HCT116 (cell line): ENCODE measurements at regions of chr7 and their contacts with region 1.

Region 1: DNA sequence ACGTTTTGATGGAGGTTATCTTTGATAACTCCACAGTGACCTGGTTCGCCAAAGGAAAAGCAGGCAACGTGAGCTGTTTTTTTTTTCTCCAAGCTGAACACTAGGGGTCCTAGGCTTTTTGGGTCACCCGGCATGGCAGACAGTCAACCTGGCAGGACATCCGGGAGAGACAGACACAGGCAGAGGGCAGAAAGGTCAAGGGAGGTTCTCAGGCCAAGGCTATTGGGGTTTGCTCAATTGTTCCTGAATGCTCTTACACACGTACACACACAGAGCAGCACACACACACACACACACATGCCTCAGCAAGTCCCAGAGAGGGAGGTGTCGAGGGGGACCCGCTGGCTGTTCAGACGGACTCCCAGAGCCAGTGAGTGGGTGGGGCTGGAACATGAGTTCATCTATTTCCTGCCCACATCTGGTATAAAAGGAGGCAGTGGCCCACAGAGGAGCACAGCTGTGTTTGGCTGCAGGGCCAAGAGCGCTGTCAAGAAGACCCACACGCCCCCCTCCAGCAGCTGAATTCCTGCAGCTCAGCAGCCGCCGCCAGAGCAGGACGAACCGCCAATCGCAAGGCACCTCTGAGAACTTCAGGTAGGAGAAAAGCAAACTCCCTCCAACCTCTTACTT is at the start of gene SERPINE1:
- DNase-seq: peak; percentile 86
- ATAC-seq: peak; percentile 71
- H3K4me3 ChIP-seq: peak within 1 kb of the TSS; percentile 40 to 50
- H3K27ac ChIP-seq: peak within 1 kb of the TSS; percentile 57
- H3K4me1 ChIP-seq: peaks cover 50 to 68% of the 10 kb centered on the region in 2 experiments
- H3K27me3 ChIP-seq: no peaks in the 10 kb centered on the region
- CTCF ChIP-seq: peak in 2 of 3 experiments; percentile 41 to 43; a peak in 3 of 6 replicates
- POLR2A ChIP-seq: peak; percentile 71
- RAD21 ChIP-seq: no peak
- total RNA-seq, gene SERPINE1: 12.8 TPM

Region 2: GRCh38 chr7:101099969-101100781 is 26.6 kb before region 1 on chr7:
- CTCF ChIA-PET with region 1: interaction called, 6 read pairs
- POLR2A ChIA-PET with region 1: interaction called, 23 read pairs
- RAD21 ChIA-PET with region 1: no interaction called
- intact Hi-C with region 1: no loop called
- DNase-seq: peak; percentile 84
- ATAC-seq: peak; percentile 81
- H3K4me3 ChIP-seq: peak overlapping the region; percentile 31 to 53
- H3K27ac ChIP-seq: peak overlapping the region; percentile 96
- H3K4me1 ChIP-seq: peaks cover 54 to 89% of the 10 kb centered on the region in 2 experiments
- H3K27me3 ChIP-seq: no peaks in the 10 kb centered on the region
- CTCF ChIP-seq: no peak
- POLR2A ChIP-seq: no peak
- RAD21 ChIP-seq: no peak